Motor neuron (in vitro differentiated cells): ENCODE measurements at regions of chr2 and their contacts with region 1.

Region 1: GRCh38 chr2:137838255-137839092 is 125.8 kb upstream of the HNMT start:
- ATAC-seq: peak; percentile 35 to 63 (median 46)
- H3K4me3 ChIP-seq: no peak overlapping the region
- H3K27ac ChIP-seq: no peak overlapping the region
- H3K4me1 ChIP-seq: peaks cover 0 to 6% of the 10 kb centered on the region in 2 donors

Region 2: GRCh38 chr2:135913727-135914365 is 1924.6 kb before region 1 on chr2:
- in situ Hi-C with region 1: loop called in 4 of 9 experiments (anchors 10 to 25 kb)
- ATAC-seq: peak in 2 of 8 experiments; percentile 29 to 53
- H3K4me3 ChIP-seq: no peak overlapping the region
- H3K27ac ChIP-seq: no peak overlapping the region
- H3K4me1 ChIP-seq: no peaks in the 10 kb centered on the region

Region 3: GRCh38 chr2:136238286-136239078 is 1600.0 kb before region 1 on chr2:
- in situ Hi-C with region 1: no loop called
- ATAC-seq: peak in 1 of 8 experiments; percentile 46
- H3K4me3 ChIP-seq: no peak overlapping the region
- H3K27ac ChIP-seq: no peak overlapping the region
- H3K4me1 ChIP-seq: no peaks in the 10 kb centered on the region

Region 4: DNA sequence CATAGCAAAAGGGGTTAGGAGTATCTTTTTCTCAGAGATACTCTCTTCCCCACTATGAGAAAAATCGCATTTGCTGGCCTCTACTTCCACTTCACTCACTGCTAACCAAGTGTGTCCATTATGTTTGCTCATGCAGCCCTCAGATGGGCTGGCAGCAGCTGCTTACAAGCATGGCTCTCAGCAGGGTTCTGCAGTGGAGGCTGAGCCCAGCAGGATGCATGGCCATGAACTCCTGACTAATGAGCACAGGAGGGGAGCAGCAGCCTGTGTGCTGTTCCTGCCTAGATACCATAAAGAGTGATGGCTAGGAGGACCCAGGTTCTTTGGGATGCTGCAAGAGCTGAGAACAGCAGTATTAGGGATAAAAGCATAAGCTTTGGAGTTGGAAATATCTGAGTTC is 1390.0 kb before region 1 on chr2:
- in situ Hi-C with region 1: loop called in 1 of 9 experiments (anchors 25 kb)
- ATAC-seq: no peak
- H3K4me3 ChIP-seq: no peak overlapping the region
- H3K27ac ChIP-seq: no peak overlapping the region
- H3K4me1 ChIP-seq: peaks cover 0 to 8% of the 10 kb centered on the region in 2 donors

Region 5: GRCh38 chr2:137493261-137493660 is 345.2 kb before region 1 on chr2:
- in situ Hi-C with region 1: loop called in 2 of 9 experiments (anchors 25 kb)
- ATAC-seq: no peak
- H3K4me3 ChIP-seq: no peak overlapping the region
- H3K27ac ChIP-seq: no peak overlapping the region
- H3K4me1 ChIP-seq: no peaks in the 10 kb centered on the region

Region 6: DNA sequence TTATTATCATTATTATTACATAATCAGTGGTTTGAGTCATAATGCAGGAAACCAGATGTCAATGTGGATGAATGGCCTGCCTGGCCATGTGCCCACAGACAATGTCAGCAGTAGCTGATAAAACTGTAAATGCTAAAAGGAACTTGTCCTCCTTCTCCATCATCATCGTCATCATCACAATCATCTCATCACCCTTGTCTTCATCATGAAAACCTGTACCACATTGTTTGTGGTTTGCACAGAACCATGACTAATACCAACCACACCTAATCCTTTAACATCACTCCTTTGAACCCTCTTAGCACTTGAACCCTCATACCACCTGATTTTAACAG is 221.8 kb after region 1 on chr2:
- in situ Hi-C with region 1: no loop called
- ATAC-seq: peak in 2 of 8 experiments; percentile 75 to 85
- H3K4me3 ChIP-seq: no peak overlapping the region
- H3K27ac ChIP-seq: no peak overlapping the region
- H3K4me1 ChIP-seq: no peaks in the 10 kb centered on the region

Region 7: DNA sequence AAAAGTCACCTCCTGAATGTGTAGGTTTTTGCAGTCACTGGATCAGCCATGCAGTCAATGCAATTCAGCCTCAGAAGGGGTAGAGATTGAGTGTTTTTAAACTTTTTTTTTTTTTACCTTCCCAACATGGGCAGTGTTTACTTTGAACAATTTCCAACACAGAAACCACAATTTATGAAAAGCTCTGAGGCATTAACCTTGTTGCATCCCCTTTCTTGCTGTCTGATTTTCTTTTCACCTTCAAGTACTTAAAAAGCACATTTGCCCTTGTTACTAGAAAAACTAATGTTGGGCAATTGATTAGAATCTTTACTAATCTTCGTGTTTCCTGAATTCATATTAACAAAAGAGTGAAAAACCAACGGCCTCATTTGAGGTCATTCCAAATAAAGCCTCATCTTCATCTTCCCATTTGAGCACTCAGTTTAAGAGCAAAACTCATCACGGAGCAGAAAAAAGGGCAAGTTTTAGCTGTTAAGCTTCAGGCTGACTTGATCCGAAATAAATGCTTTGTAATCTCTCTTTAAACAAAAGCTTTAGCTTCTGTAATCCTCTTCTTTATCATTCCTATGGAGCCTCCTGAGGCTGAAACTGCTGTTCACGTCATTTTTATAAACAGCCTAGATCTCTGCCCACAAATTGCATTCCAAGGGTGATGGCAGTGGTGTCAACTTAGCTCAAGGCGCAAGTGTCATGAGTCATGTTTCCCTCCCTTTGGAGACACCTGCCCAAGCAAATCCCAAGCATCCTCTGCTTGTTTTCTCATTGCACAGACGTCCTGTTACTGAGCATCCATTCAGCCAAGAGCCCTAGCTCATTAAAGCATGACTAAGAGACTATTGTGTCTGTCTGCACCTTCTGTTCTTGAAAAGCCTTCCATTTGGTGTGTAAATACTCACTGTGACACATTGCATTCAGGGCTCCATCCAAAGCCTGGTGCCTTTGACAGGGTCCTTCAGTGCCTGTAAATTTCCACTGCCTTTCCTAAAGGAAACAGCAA is 233.5 kb after region 1 on chr2:
- in situ Hi-C with region 1: no loop called
- ATAC-seq: peak in 5 of 8 experiments; percentile 95 to 96 (median 96)
- H3K4me3 ChIP-seq: no peak overlapping the region
- H3K27ac ChIP-seq: no peak overlapping the region
- H3K4me1 ChIP-seq: peaks cover 3 to 8% of the 10 kb centered on the region in 2 donors